GM10248 (cell line): ENCODE measurements at regions of chr16 and their contacts with region 1.

Region 1: DNA sequence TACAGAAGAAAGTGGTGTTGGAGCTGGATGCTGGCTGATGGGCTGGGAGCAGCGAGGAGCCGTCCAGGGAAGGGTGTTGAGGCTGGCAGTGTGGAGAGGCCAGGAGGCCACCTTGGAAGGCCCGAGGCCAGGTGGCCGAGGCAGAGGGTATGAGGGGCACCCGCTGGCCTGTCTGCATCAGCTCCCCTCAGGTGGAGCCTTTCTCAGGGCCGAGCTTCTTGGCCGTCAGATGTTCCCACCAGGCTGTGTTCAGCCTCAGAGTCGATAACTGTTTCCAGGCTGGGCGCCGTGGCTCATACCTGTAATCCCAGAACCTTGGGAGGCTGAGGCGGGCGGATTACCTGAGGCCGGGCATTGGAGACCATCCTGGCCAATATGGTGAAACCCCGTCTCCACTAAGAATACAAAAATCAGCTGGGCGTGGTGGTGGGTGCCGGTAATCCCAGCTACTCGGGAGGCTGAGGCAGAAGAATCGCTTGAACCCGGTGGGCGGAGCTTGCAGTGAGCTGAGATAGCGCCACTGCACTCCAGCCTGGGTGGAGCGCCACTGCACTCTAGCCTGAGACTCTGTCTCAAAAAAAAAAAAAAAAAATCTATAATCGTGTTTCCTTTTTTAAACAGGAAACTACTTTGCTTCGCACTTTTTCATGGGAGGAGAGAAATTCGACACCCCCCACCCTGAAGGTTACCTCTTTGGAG is 25.3 kb downstream of the MGRN1 start:
- DNase-seq: no peak
- CTCF ChIP-seq: no peak

Region 2: GRCh38 chr16:4525067-4525466 is 124.8 kb before region 1 on chr16:
- CTCF ChIA-PET with region 1: no interaction called
- POLR2A ChIA-PET with region 1: no interaction called
- DNase-seq: no peak
- CTCF ChIP-seq: no peak

Region 3: GRCh38 chr16:4538350-4539235 is 111.3 kb before region 1 on chr16 and contains the start of gene CDIP1:
- CTCF ChIA-PET with region 1: no interaction called
- POLR2A ChIA-PET with region 1: no interaction called
- DNase-seq: peak; percentile 96
- CTCF ChIP-seq: no peak

Region 4: GRCh38 chr16:4624015-4624826 is 25.7 kb before region 1 on chr16 and contains the start of gene MGRN1:
- CTCF ChIA-PET with region 1: interaction called, 31 read pairs
- POLR2A ChIA-PET with region 1: no interaction called
- DNase-seq: peak; percentile 93
- CTCF ChIP-seq: peak; percentile 93

Region 5: GRCh38 chr16:4668313-4668963 is 18.5 kb after region 1 on chr16:
- CTCF ChIA-PET with region 1: interaction called, 13 read pairs
- POLR2A ChIA-PET with region 1: no interaction called
- DNase-seq: no peak
- CTCF ChIP-seq: no peak

Region 6: DNA sequence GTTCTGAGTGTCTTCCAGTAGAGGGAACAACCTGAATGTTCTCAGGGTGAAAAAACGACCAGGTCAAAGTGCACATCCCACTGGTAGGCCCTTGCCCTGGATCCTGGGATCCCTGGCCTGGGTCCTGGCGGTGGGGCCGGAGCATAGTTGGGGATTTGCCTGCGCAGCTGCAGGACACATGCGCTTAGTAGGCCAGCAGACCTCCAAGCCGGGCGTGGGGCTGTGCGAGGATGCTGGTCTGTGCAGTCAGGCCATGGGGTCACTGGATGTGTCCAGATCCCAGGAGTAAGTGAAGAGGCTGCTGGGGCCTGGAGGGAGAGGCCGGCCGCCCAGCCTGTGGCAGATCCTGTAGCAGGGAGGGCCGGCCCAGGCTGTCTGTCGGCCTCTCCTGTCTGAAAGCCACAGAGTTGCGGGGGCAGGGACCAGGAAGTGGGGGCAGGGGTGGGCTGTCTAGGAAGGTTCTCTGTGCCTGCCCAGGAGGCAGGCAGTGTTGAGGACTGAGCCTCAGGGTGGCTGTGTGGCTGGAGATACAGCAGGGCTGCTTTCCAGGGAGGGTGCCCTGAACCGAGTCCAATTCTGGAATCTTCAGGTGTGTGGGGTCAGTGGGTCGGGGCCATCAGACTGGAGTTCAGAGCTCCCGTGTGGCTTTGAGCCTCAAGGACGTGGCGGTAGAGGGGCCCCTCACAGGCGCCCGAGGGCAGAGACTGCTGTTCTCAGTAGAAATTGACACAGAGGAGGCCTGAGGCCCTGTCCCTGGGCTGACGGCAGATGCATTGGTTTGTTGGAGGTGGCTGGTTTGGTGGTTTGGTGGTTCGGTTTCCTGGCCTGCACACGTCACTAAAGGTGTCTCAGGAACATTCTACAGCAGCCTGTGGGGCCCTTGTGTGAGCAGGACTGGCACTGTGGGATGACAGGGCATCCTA is 26.2 kb after region 1 on chr16:
- CTCF ChIA-PET with region 1: interaction called, 11 read pairs
- POLR2A ChIA-PET with region 1: no interaction called
- DNase-seq: no peak
- CTCF ChIP-seq: no peak